OCI-LY7 (cell line): ENCODE measurements at regions of chr2 and their contacts with region 1.

Region 1: GRCh38 chr2:151409601-151410484 is at the start of gene RIF1:
- DNase-seq: peak; percentile 86
- H3K4me3 ChIP-seq: peak within 1 kb of the TSS; percentile 91
- H3K27ac ChIP-seq: peak within 1 kb of the TSS; percentile 72
- H3K4me1 ChIP-seq: peaks cover 14% of the 10 kb centered on the region
- CTCF ChIP-seq: peak; percentile 67
- total RNA-seq, gene RIF1: 45.3 and 52.4 TPM in 2 replicates

Region 2: GRCh38 chr2:149587220-149587949 is 1822.5 kb before region 1 on chr2 and contains the start of gene MMADHC:
- CTCF ChIA-PET with region 1: no interaction called
- POLR2A ChIA-PET with region 1: no interaction called
- intact Hi-C with region 1: loop called (anchors 10 kb)
- DNase-seq: peak; percentile 97
- H3K4me3 ChIP-seq: peak within 1 kb of the TSS; percentile 94
- H3K27ac ChIP-seq: peak within 1 kb of the TSS; percentile 88
- H3K4me1 ChIP-seq: peaks cover 20% of the 10 kb centered on the region
- CTCF ChIP-seq: no peak
- total RNA-seq, gene MMADHC: 68.5 and 73.6 TPM in 2 replicates

Region 3: DNA sequence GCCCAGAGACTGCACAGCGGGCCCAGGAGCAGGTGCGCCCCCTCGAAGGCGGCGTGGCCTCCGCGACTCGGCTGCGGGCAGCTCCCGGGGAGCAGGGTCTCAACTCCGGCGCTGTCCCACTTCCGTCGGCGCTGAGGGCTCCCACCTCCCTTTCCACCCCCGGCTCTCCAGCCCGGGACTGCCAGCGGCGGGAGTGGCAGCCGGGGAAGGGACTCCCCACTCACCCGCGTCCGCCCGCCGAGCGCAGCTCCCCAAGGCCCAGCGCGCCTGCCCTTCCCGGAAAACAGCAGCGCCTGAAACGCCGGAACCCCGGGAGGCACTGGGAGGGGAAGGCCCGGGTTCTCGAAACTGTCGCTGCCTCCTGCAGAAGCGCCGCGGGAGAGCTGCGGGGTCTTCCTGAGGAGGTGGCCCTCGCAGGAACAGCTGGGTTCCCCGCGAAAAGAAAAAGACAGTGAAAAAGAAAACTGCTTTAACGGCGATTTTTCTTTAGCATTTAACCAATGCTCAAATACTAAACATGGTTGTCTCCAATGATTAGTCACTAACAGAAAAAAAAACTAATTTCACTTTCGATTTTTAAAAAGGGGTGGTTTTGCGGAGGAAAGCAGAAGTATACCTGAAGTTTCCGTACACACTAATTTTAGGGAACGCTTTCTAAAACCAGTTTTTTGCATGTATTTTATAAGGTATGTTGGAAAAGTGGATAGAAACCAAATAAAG is 120.3 kb before region 1 on chr2 and contains the start of gene NMI:
- CTCF ChIA-PET with region 1: no interaction called
- POLR2A ChIA-PET with region 1: interaction called, 3 read pairs
- intact Hi-C with region 1: loop called (anchors 10 kb)
- DNase-seq: peak; percentile 59
- H3K4me3 ChIP-seq: peak within 1 kb of the TSS; percentile 76
- H3K27ac ChIP-seq: peak within 1 kb of the TSS; percentile 79
- H3K4me1 ChIP-seq: peaks cover 19% of the 10 kb centered on the region
- CTCF ChIP-seq: peak; percentile 24
- total RNA-seq, gene NMI: 13.0 and 16.3 TPM in 2 replicates

Region 4: DNA sequence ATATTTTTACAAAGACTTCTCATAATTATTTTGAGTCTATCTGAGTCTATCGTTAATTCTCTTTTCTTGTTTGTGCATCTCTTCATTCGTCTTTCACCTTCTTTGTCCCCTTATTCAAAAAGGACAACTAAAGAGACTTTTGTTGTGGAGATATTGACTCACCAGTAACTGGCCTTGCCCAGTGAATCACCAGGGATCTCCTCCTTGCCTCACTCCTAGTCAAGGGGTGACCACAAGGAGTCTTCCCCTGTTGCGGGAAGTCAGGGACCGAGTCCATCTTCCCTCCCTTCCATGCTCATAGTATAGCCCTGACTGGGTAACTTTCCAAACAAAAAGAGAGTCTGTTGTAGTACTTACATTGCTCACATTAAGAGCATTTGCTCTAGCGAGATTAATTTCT is 165.5 kb after region 1 on chr2:
- CTCF ChIA-PET with region 1: no interaction called
- POLR2A ChIA-PET with region 1: no interaction called
- intact Hi-C with region 1: no loop called
- DNase-seq: no peak
- H3K4me3 ChIP-seq: no peak overlapping the region
- H3K27ac ChIP-seq: no peak overlapping the region
- H3K4me1 ChIP-seq: no peaks in the 10 kb centered on the region
- CTCF ChIP-seq: no peak

Region 5: DNA sequence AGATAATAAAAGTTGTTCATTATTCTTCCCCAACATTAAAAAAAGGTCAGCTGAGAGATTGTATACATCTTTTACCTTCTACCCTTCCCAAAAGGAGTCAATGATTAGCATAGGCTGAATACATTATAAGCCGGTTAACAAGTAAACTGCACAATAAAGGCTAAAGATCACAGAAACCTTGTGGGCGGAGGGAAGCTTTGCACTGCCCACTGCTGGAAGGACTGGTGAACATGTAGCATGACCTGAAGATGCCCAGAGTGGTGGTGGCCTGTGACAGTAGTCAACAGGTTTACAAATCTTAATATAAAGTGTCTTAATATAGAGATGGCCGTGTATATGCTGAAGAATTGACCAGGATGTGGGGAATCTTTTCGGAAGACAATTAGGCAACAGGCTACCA is 382.7 kb after region 1 on chr2:
- CTCF ChIA-PET with region 1: no interaction called
- POLR2A ChIA-PET with region 1: no interaction called
- intact Hi-C with region 1: no loop called
- DNase-seq: no peak
- H3K4me3 ChIP-seq: no peak overlapping the region
- H3K27ac ChIP-seq: no peak overlapping the region
- H3K4me1 ChIP-seq: no peaks in the 10 kb centered on the region
- CTCF ChIP-seq: 0 out of 2 replicates have a peak, but pooled peaks have one; percentile 12